Endothelial cell of umbilical vein (primary cell): ENCODE measurements at regions of chr11 and their contacts with region 1.

Region 1: GRCh38 chr11:97454988-97455387 is 1065.2 kb downstream of the JRKL start:
- DNase-seq: peak; percentile 16
- H3K4me3 ChIP-seq: no peak overlapping the region
- H3K27ac ChIP-seq: no peak overlapping the region
- H3K4me1 ChIP-seq: no peaks in the 10 kb centered on the region
- H3K27me3 ChIP-seq: no peaks in the 10 kb centered on the region
- CTCF ChIP-seq: peak in 1 of 2 donors; percentile 16
- POLR2A ChIP-seq: no peak

Region 2: GRCh38 chr11:97033178-97033577 is 421.8 kb before region 1 on chr11:
- CTCF ChIA-PET with region 1: no interaction called
- POLR2A ChIA-PET with region 1: no interaction called
- dilution Hi-C with region 1: no loop called
- intact Hi-C with region 1: no loop called
- DNase-seq: no peak
- H3K4me3 ChIP-seq: no peak overlapping the region
- H3K27ac ChIP-seq: no peak overlapping the region
- H3K4me1 ChIP-seq: no peaks in the 10 kb centered on the region
- H3K27me3 ChIP-seq: no peaks in the 10 kb centered on the region
- CTCF ChIP-seq: no peak
- POLR2A ChIP-seq: no peak

Region 3: DNA sequence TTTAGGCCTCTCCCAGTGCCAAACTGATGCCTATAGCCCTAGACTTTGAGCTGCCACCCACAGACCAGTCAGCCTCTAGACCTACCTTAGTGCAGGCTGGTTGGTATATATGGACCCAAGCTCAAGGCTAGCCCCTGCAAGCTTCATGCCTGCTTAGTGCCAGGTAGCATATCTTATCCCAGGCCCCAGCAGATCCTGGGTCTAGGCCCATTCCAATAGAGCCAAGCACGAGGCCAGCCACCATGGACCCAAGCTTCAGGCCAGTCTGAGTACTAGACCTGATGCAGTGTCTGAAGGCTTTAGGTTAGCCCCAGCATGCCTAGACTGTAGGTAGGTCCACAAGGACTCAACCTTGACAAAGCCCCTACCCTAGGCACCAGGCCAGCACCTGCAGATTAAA is 16.5 kb after region 1 on chr11:
- CTCF ChIA-PET with region 1: no interaction called
- POLR2A ChIA-PET with region 1: no interaction called
- dilution Hi-C with region 1: no loop called
- intact Hi-C with region 1: no loop called
- DNase-seq: no peak
- H3K4me3 ChIP-seq: no peak overlapping the region
- H3K27ac ChIP-seq: no peak overlapping the region
- H3K4me1 ChIP-seq: no peaks in the 10 kb centered on the region
- H3K27me3 ChIP-seq: no peaks in the 10 kb centered on the region
- CTCF ChIP-seq: no peak
- POLR2A ChIP-seq: no peak

Region 4: DNA sequence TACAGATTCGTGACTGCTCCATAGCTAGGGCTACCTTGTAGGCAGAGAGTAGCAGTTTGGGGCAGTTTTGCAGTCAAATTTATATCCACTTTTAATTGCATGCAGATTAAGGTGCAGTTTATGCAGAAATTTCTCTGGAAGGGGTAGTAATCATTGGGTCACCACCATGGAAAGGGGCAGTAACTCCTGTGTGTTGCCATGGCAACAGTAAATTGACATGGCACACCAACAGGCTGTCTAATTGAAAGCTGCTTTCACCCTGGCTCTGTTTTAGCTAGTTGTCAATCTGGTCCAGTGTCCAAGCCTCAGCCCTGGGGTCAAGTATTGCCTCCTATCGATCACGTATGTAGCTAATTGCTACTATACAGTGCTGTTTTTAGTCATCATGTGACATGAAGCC is 779.7 kb after region 1 on chr11:
- CTCF ChIA-PET with region 1: no interaction called
- POLR2A ChIA-PET with region 1: no interaction called
- dilution Hi-C with region 1: no loop called
- intact Hi-C with region 1: no loop called
- DNase-seq: no peak
- H3K4me3 ChIP-seq: no peak overlapping the region
- H3K27ac ChIP-seq: no peak overlapping the region
- H3K4me1 ChIP-seq: no peaks in the 10 kb centered on the region
- H3K27me3 ChIP-seq: no peaks in the 10 kb centered on the region
- CTCF ChIP-seq: no peak
- POLR2A ChIP-seq: no peak

Region 5: GRCh38 chr11:99015634-99016454 is 1560.9 kb after region 1 on chr11:
- CTCF ChIA-PET with region 1: interaction called, 46 read pairs
- POLR2A ChIA-PET with region 1: no interaction called
- dilution Hi-C with region 1: no loop called
- intact Hi-C with region 1: no loop called
- DNase-seq: peak; percentile 38
- H3K4me3 ChIP-seq: no peak overlapping the region
- H3K27ac ChIP-seq: no peak overlapping the region
- H3K4me1 ChIP-seq: no peaks in the 10 kb centered on the region
- H3K27me3 ChIP-seq: peaks cover 2 to 4% of the 10 kb centered on the region in 2 experiments
- CTCF ChIP-seq: peak; percentile 46 to 59
- POLR2A ChIP-seq: no peak